Left ventricle myocardium inferior (tissue), 1 donor: ENCODE measurements at regions of chr22 and their contacts with region 1.

Region 1: DNA sequence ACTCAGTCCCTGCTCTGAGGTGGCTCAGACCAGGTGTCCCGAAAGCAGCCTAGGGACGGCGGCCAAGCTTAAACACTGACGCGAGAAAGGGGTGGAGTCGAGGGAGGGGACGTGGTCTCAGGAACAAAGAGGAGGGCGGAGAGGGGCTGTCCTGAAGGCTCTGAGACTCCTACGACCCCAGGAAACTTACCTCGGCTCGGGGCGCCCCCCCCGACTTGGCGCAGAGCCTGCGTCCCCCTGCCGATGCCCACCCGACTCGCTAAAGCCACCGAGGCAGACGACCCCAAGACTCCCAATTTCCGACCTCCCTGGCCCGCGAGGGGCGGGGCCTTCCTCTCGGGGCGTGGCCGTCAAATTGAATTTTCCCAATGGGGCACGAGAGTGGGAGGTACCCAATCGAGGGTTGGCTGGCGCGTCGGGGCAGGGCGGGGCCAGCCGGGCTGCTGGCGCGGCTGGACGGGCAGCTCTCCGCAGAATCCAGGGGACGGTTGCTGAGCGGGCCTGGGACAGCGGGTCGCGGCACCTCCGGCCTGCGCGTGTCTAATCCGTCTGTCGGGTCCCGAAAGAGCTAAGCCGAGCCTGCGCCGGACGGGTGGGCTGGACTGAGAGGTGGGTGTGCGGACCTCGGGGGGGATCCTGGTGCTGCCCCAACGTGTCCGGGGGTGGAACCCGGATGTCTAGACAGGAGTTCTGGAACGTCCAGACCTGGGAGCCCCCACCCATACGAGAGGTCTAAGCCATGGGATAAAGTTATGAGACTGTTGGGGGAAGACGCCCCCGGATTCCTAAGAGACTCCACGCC is at the start of gene SMTN:
- DNase-seq: peak; percentile 93
- H3K4me3 ChIP-seq: peak within 1 kb of the TSS; percentile 89
- H3K27ac ChIP-seq: peak within 1 kb of the TSS; percentile 95
- H3K4me1 ChIP-seq: peaks cover 65% of the 10 kb centered on the region
- H3K27me3 ChIP-seq: no peaks in the 10 kb centered on the region
- CTCF ChIP-seq: no peak
- total RNA-seq, gene SMTN: 245 TPM

Region 2: DNA sequence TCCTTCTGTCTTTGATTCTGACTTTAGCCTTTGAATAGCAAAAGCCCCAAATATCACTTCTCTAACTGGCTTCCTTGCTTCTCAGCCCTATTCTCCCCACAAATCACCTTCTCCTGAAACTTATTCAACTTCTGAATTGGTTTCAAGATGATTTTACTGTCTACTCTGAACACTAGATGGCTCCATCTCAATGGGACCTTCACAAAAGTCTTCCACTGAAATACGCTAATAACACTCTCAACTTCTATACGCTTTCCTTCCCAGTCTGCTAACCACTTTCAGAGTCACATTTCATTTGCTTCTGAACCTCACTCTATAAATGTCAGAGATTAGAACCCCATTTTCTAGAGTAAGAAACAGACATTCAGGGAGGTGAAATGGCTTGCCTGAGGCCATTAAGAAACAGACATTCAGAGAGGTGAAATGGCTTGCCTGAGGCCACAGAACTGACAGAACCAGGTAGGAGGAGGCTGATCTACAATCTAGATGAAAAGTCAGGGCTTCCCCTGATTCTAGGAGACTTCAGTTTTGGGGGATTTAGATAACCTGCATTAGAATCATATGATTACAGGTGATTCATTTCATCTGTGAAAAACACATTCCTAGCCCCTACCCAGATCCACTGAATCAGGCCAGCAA is 133.1 kb before region 1 on chr22:
- intact Hi-C with region 1: loop called (anchors 5 kb)
- DNase-seq: no peak
- H3K4me3 ChIP-seq: no peak overlapping the region
- H3K27ac ChIP-seq: peak overlapping the region; percentile 75
- H3K4me1 ChIP-seq: peaks cover 40% of the 10 kb centered on the region
- H3K27me3 ChIP-seq: no peaks in the 10 kb centered on the region
- CTCF ChIP-seq: peak; percentile 79

Region 3: DNA sequence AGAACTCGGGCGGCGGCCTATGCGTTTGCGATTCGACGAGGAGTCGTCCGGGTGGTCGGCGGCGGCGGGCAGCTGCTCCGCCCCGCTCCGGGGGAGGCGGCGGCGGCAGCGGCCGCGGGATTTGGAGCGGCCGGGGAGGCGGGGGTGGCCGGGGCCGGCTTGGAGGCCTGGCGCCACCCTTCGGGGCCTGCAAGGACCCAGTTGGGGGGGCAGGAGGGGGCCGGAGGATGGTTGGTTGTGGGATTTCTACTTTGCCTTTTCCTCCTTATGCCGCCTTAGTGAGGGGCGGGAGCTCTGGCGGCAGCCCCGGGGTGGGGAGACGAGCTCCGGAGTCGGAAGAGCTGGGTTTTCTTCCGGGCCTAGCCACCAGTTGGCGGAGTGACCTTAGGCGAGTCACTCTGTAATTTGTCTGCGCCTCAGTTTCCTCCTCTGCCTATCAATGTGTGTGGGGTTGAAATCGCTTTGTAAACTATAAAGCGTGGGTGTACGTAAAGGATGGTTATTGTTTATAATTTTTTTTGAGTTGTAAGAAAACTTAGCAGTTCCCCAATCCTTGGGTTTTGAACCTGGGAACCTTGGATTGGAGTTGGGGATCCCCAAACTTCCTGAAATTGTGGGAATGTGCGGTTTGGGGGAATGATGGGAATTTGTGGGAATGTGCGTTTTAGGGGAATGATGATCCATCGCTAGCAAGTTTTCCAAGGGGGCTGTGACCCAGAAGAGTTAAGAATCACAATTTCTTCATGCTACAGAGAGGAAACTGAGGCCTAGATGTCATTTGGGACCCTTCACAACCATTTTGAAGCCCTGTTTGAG is 111.3 kb before region 1 on chr22:
- intact Hi-C with region 1: loop called (anchors 5 kb)
- DNase-seq: peak; percentile 38
- H3K4me3 ChIP-seq: peak overlapping the region; percentile 79
- H3K27ac ChIP-seq: peak overlapping the region; percentile 97
- H3K4me1 ChIP-seq: peaks cover 68% of the 10 kb centered on the region
- H3K27me3 ChIP-seq: no peaks in the 10 kb centered on the region
- CTCF ChIP-seq: no peak

Region 4: GRCh38 chr22:31046539-31047226 is 34.4 kb before region 1 on chr22:
- intact Hi-C with region 1: loop called (anchors 5 kb)
- DNase-seq: peak; percentile 75
- H3K4me3 ChIP-seq: no peak overlapping the region
- H3K27ac ChIP-seq: peak overlapping the region; percentile 88
- H3K4me1 ChIP-seq: peaks cover 77% of the 10 kb centered on the region
- H3K27me3 ChIP-seq: no peaks in the 10 kb centered on the region
- CTCF ChIP-seq: no peak